ENCODE measurements at regions of chr3 and their contacts with region 1.

Region 1: GRCh38 chr3:6351752-6352151 is 509.2 kb upstream of the GRM7 start:
- DNase-seq: no peak
- H3K4me3 ChIP-seq: no peak overlapping the region
- CTCF ChIP-seq: no peak

Region 2: GRCh38 chr3:6260551-6261191 is 91.1 kb before region 1 on chr3:
- in situ Hi-C with region 1: no loop called
- DNase-seq: no peak
- H3K4me3 ChIP-seq: no peak overlapping the region
- CTCF ChIP-seq: no peak

Region 3: GRCh38 chr3:6512172-6512800 is 160.5 kb after region 1 on chr3:
- in situ Hi-C with region 1: loop called (anchors 25 kb)
- DNase-seq: no peak
- H3K4me3 ChIP-seq: no peak overlapping the region
- CTCF ChIP-seq: no peak